B cell (primary cell): ENCODE measurements at regions of chr9 and their contacts with region 1.

Region 1: GRCh38 chr9:137705443-137706293 is 86.9 kb downstream of the EHMT1 start:
- DNase-seq: peak; percentile 73
- ATAC-seq: peak; percentile 83
- H3K4me3 ChIP-seq: peak overlapping the region in 3 of 5 experiments; percentile 1 to 36 (median 25)
- H3K4me3 Mint-ChIP-seq: peak overlapping the region; percentile 83
- H3K27ac ChIP-seq: peak overlapping the region; percentile 41 to 65
- H3K27ac Mint-ChIP-seq: peak overlapping the region; percentile 97
- H3K4me1 ChIP-seq: peaks cover 38 to 52% of the 10 kb centered on the region in 2 donors
- H3K4me1 Mint-ChIP-seq: peaks cover 65% of the 10 kb centered on the region
- H3K27me3 ChIP-seq: no peaks in the 10 kb centered on the region
- H3K27me3 Mint-ChIP-seq: no peaks in the 10 kb centered on the region
- CTCF ChIP-seq: no peak

Region 2: DNA sequence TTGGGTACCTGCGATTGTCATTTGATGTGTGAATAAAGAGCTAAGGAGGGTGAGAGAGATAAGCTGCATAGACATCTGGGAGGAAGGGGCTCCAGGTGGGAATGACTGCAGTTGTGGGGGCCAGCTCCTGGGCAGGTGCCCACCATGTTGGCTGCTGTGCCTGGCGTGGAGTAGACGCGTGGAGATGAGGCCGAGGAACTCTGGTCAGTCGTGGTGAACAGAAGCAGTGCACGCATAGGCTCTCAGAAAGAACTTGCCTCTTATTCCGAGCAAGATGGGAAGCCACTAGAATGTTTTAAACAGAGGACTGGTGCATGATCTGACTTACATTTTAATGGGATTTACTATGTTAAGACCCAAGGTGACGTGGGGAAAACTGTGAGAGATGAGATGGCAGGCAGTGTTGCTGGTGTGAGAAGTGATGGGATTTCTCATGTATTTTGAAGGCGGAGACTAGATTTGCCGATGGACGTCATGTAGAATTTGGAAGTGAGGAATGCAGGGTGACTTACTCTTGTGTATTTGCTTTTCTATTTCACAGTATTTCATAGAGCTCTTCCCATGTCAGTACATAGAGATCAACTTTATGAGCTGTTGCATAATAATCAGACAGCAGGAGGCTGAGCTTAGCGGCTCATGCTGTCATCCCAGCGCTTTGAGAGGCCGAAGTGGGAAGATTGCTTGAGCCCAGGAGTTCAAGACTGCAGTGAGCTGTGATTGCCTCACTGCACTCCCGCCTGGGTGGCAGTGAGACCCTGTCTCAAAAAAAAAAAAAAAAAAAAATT is 15.7 kb before region 1 on chr9:
- CTCF ChIA-PET with region 1: interaction called, 13 read pairs
- POLR2A ChIA-PET with region 1: interaction called, 4 read pairs
- intact Hi-C with region 1: loop called (anchors 2 kb)
- DNase-seq: no peak
- ATAC-seq: no peak
- H3K4me3 ChIP-seq: no peak overlapping the region
- H3K4me3 Mint-ChIP-seq: no peak overlapping the region
- H3K27ac ChIP-seq: no peak overlapping the region
- H3K27ac Mint-ChIP-seq: peak overlapping the region; percentile 42
- H3K4me1 ChIP-seq: peaks cover 35 to 42% of the 10 kb centered on the region in 2 donors
- H3K4me1 Mint-ChIP-seq: peaks cover 65% of the 10 kb centered on the region
- H3K27me3 ChIP-seq: no peaks in the 10 kb centered on the region
- H3K27me3 Mint-ChIP-seq: no peaks in the 10 kb centered on the region
- CTCF ChIP-seq: no peak

Region 3: GRCh38 chr9:137694967-137695879 is 10.4 kb before region 1 on chr9:
- CTCF ChIA-PET with region 1: interaction called, 13 read pairs
- POLR2A ChIA-PET with region 1: interaction called, 4 read pairs
- intact Hi-C with region 1: loop called (anchors 2 kb)
- DNase-seq: peak; percentile 69
- ATAC-seq: peak; percentile 56
- H3K4me3 ChIP-seq: no peak overlapping the region
- H3K4me3 Mint-ChIP-seq: peak overlapping the region; percentile 49
- H3K27ac ChIP-seq: peak overlapping the region in 1 of 2 donors; percentile 23
- H3K27ac Mint-ChIP-seq: peak overlapping the region; percentile 86
- H3K4me1 ChIP-seq: peaks cover 37 to 43% of the 10 kb centered on the region in 2 donors
- H3K4me1 Mint-ChIP-seq: peaks cover 66% of the 10 kb centered on the region
- H3K27me3 ChIP-seq: no peaks in the 10 kb centered on the region
- H3K27me3 Mint-ChIP-seq: no peaks in the 10 kb centered on the region
- CTCF ChIP-seq: peak; percentile 72